A549 (cell line): ENCODE measurements at regions of chrX and their contacts with region 1.

Region 1: DNA sequence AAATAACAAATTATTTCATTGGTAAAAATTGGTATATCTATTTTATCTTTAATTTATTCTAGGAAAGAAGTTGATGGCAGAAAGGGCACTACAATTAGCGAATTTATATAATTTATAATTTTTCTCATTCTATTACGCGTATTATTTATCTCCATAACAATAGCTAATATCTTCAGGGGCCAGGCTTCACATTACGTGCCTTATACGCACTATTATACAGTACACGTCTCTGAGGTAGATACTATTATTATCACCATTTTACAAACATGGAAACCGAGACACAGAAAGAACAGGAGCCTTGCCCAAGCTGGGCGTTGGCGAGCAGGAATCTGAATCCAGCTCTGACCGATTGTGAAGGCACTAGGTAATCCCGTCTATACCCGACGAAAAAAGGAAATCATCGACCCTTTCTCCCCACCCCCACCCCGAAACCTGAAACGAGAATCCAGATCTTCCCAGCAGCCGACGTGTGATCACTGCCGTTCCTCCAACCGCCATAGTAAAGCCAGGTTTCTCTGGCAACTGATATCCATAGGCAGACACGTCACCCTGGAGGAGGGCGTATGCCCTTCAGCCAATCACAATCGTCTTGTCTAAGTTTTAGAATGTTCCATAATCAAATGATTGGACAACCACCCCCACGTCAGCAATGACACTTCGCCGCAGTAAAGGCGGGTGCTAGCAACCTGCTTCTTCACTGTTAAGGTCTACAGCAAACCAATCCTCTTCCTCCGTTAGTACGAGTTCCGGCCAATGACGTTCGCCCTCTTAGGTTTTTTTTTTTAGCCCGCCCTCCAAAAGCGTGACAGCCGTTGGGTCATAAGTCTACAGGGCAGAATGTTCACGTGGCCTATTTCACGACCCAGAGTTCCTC is at the start of gene MORF4L2:
- DNase-seq: peak; percentile 81 to 99
- ATAC-seq: peak; percentile 94 to 95
- H3K4me3 ChIP-seq: peak within 1 kb of the TSS; percentile 99
- H3K27ac ChIP-seq: peak within 1 kb of the TSS; percentile 96 to 100
- H3K4me1 ChIP-seq: peaks cover 30% of the 10 kb centered on the region
- CTCF ChIP-seq: no peak
- EP300 ChIP-seq: no peak
- POLR2A ChIP-seq: peak; percentile 93
- RAD21 ChIP-seq: no peak
- polyA plus RNA-seq, gene MORF4L2: 572 and 582 TPM in 2 replicates

Region 2: DNA sequence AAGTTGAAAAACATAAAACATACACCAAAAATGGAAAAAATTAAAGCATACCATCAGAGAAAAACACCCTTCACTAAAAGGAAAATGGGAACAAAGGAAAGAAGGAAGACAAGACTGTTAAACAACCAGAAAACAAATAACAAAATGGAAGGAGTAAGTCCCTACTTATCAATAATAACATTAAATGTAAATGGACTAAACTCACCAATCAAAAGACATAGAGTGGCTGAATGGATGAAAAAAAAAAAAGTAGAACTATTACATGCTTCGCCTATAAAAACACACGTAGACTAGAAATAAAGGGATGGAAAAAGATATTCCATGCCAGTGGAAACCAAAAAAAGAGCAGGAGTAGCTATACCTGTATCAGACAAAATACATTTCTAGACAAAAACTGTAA is 1150.5 kb before region 1 on chrX:
- CTCF ChIA-PET with region 1: no interaction called
- POLR2A ChIA-PET with region 1: no interaction called
- DNase-seq: no peak
- ATAC-seq: no peak
- H3K4me3 ChIP-seq: no peak overlapping the region
- H3K27ac ChIP-seq: no peak overlapping the region
- H3K4me1 ChIP-seq: no peaks in the 10 kb centered on the region
- CTCF ChIP-seq: no peak
- EP300 ChIP-seq: no peak
- POLR2A ChIP-seq: no peak
- RAD21 ChIP-seq: no peak

Region 3: DNA sequence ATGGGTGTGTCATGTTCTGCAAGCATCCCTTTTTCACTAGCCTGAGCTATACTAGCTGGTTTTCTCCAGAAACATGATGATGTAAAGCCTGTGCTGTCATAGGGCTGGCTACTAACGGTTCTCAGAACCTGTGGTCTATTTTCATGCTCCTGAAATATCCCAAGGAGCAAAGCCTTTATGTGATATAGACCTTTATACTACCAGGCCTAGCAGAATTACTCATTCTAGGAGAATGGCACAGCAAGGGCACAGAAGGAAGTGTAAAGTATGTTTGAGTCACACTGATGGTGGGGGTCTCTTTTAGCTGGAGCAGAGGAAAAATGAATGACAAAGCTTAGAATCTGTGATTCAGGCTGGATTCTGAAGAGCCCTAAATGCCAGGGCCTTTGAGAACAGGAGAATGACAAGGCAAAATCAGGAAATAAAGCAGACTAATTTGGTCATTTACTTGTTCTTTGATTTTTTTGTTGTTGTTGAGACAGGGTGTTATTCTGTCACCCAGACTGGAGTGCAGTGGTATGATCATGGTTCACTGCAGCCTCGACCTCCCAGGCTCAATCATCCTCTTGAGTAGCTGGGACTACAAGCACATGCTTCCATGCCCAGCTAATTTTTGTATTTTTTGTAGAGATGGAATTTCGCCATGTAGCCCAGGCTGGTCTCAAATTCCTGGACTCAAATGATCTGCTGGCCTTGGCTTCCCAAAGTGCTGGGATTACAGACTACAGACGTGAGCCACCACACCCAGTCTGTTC is 45.9 kb before region 1 on chrX:
- CTCF ChIA-PET with region 1: no interaction called
- POLR2A ChIA-PET with region 1: interaction called, 10 read pairs
- DNase-seq: peak in 1 of 2 experiments; percentile 32
- ATAC-seq: peak; percentile 51 to 54
- H3K4me3 ChIP-seq: no peak overlapping the region
- H3K27ac ChIP-seq: peak overlapping the region; percentile 73 to 77
- H3K4me1 ChIP-seq: peaks cover 51% of the 10 kb centered on the region
- CTCF ChIP-seq: no peak
- EP300 ChIP-seq: no peak
- POLR2A ChIP-seq: no peak
- RAD21 ChIP-seq: no peak

Region 4: GRCh38 chrX:103674531-103675454 is 11.6 kb before region 1 on chrX:
- CTCF ChIA-PET with region 1: no interaction called
- POLR2A ChIA-PET with region 1: interaction called, 12 read pairs
- DNase-seq: no peak
- ATAC-seq: peak; percentile 45 to 70; a peak in 5 of 6 replicates
- H3K4me3 ChIP-seq: no peak overlapping the region
- H3K27ac ChIP-seq: no peak overlapping the region
- H3K4me1 ChIP-seq: no peaks in the 10 kb centered on the region
- CTCF ChIP-seq: no peak
- EP300 ChIP-seq: no peak
- POLR2A ChIP-seq: no peak
- RAD21 ChIP-seq: no peak

Region 5: GRCh38 chrX:103716962-103717361 is 30.5 kb after region 1 on chrX:
- CTCF ChIA-PET with region 1: no interaction called
- POLR2A ChIA-PET with region 1: no interaction called
- DNase-seq: peak in 1 of 2 experiments; percentile 10
- ATAC-seq: peak in 1 of 2 experiments; percentile 47; a peak in 1 of 6 replicates
- H3K4me3 ChIP-seq: no peak overlapping the region
- H3K27ac ChIP-seq: peak overlapping the region in 1 of 2 experiments; percentile 55; a peak in 1 of 6 replicates
- H3K4me1 ChIP-seq: 0 out of 3 replicates have a peak, but pooled peaks cover 3% of the 10 kb centered on the region
- CTCF ChIP-seq: no peak
- EP300 ChIP-seq: no peak
- POLR2A ChIP-seq: no peak
- RAD21 ChIP-seq: no peak